Sciatic nerve (tissue), 2 donors: ENCODE measurements at regions of chr14 and their contacts with region 1.

Region 1: DNA sequence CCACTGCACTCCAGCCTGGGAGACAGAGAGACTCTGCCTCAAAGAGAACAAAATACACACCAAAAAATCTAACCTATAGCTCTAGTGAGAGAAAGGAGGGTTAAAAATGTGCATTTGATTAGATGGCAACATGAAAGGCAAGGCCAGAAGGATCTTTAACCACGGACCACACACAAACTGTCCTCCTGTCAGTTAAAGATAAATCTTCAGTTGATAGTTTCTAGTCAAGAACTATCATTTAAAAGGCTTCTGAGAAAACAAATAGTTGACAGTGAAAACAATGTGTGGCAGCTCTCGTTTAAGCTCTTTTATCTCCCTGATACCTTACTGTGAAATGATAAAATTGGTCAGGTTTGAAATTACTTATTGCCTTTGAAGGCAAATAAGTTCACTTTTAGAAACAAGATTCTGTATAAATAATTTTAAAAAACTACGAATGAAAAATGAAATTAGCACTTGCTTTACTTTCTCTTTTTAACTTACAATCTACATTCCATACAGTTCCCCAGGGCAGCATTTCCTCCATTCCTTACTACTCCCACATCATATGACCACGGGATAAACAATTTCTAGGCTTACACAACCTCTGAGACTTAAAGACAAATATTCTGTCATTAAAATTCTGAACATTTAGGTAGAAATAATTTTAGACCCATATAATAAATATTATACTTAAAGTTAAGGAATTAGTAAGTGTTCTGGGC is 71.4 kb upstream of the GNPNAT1 start:
- DNase-seq: no peak
- ATAC-seq: peak; percentile 69

Region 2: GRCh38 chr14:52791203-52792096 is 71.3 kb before region 1 on chr14 and contains the start of gene GNPNAT1:
- intact Hi-C with region 1: loop called (anchors 2 kb)
- DNase-seq: peak; percentile 88
- ATAC-seq: peak; percentile 94
- total RNA-seq, gene GNPNAT1: 14.9 TPM

Region 3: DNA sequence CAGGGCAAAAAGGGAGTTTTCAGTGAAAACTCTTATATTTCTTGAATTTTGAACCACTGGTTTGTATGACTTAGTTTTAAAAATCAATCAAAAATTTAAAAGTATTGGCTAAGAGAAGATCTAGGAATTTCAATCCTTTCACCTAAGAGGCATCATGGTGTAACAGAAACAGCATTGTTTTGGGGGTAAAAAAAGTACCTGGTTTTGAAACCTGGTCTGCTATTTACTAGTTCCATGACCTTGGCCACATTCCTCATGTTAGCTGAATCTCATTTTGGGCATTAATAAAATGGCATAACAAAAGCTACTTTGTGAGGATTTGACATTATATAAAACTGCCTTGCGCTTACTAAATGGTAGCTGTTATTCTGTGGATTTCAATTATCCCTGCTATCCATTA is 54.7 kb before region 1 on chr14:
- intact Hi-C with region 1: no loop called
- DNase-seq: no peak
- ATAC-seq: no peak

Region 4: DNA sequence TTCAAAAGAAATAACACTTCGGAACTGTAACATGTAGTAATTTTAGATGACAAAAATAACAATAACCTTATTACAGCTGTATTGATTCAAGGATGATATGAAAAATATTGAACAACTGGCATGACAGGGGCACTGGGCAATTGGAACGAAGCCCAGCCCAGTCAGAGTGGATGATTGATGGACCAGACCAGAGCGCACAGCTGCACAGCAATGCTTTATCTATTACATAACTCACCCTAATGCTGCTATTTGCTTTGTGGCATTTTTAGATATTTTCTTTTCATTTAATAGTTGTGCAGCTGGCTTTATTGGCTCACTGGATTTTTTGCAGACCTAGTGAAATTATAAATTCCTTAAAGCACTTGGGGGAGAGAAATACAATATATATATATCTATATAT is 115.0 kb after region 1 on chr14:
- intact Hi-C with region 1: no loop called
- DNase-seq: no peak
- ATAC-seq: peak; percentile 60